Sciatic nerve (tissue), 2 donors: ENCODE measurements at regions of chr20 and their contacts with region 1.

Region 1: GRCh38 chr20:37501940-37502339 is 19.1 kb upstream of the NNAT start:
- DNase-seq: no peak
- ATAC-seq: no peak

Region 2: DNA sequence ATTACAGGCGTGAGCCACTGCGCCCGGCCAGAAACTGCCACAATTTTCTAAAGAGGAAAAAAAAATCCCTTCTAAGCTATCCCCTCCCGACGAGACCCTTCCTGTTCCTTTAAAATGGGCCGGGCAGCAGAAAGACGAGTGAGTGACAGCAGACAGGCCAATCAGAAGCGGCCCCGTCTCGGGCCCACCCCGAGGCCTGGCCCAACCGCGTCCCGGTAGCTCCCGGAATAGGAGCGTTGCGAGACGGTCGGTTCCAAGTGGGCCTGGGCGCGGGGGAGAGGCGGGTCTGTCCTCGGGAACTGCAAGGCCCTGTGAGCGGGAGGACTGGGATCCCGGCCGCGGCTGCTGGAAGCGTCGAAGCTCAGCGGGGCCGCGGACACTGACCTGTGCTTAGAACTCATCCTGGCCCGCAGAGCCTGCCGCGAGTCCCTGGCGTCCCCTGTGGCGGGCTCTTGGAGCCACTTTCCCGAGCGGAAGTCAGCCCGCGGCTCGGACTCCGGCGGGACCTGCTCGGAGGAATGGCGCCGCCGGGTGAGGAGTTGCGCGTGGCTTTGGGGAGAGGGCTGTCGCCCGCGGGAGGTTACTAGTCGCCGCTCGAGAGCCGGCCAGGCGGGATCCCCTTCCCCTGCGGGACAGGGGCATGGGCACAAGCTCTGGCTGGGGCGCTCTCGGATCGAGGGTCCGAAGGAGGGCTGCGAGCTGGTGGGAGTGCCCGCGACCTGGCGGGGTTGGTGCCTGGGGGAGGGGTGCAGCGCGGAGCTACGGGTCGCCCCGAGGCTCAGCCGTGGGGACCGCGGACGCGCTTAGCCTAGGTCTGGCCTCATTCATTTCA is 322.9 kb before region 1 on chr20 and contains the starts of genes MROH8 and RPN2:
- intact Hi-C with region 1: no loop called
- DNase-seq: peak; percentile 98
- ATAC-seq: peak; percentile 99
- total RNA-seq, gene MROH8: 5.2 TPM
- total RNA-seq, gene RPN2: 97.9 TPM

Region 3: DNA sequence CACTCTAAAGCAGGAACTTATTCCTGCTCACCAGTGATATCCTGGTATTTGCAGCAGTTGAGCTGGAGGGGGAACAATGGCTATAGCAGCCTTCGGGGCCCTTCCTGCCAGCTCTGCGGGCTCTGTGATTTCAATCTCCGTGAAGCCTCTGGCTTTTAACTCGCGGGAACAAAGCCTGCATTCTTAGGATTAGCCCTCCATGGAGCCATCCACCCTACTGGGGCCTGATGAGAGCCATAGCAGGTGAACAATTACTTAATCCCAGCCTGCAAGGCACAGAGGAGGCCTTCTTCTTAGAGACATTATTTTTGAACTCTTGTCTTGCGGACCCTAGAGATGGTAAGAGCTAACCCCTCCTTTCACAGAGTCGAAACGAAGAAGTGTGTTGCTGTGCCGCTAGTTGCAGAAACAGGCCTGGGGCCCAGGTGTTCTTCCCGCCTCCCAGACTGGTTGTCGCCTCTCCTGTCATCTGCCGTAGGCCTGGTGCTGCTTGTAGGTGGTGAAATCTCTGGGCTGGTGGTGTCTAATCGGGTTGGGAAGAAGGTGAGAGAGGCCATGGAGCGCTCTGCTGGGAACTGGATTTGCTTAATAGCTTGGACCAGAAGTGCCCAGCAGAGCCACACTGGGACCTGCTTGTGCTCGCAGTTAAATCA is 250.0 kb before region 1 on chr20:
- intact Hi-C with region 1: loop called (anchors 1 kb)
- DNase-seq: no peak
- ATAC-seq: peak; percentile 30